Psoas muscle (tissue), 8 donors: ENCODE measurements at regions of chr7 and their contacts with region 1.

Region 1: DNA sequence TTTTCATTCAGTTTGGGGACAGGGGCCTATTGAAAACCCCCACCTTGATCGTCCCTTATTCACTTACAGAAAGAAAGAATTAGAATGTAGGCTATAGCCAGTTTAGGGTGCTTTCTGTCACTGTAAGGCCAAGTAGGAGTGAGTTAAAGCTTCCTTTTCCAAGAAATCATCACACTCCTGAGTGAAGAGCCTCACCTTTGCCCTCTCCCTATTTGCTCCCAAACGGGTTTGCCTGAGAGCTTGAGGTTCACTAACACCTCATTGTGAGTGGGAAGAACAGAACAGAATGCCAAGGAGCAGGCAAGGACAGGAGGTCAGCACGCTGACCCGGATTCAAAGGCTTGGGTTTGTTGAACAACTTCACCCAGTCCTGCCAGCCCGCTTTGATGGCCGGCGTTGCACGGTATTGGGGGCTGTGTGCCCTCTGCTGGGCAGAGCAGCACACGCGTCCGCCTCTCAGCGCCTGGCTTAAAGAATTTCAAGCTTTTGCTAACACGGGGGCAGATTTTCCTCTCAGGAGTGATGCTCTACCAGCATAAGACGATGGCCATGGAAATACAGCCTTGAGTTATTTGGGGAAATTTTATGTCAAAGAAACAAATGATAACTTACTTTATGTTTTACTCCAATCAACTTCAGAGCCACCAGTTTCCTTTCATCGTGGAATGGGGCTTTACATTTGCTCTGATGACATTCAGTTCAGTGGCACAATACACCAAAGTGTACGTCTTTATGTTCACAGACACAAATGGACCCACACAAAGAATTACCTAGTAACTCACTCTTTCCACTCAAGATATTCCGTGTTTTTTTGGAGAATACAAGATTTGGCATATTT is 470.0 kb downstream of the SUGCT start:
- DNase-seq: peak; percentile 13 to 59
- ATAC-seq: peak; percentile 42 to 74 (median 70)
- H3K4me3 ChIP-seq: no peak overlapping the region
- H3K27ac ChIP-seq: no peak overlapping the region
- H3K4me1 ChIP-seq: no peaks in the 10 kb centered on the region
- H3K27me3 ChIP-seq: no peaks in the 10 kb centered on the region
- CTCF ChIP-seq: peak; percentile 50

Region 2: GRCh38 chr7:40329601-40330153 is 275.1 kb before region 1 on chr7:
- intact Hi-C with region 1: loop called (anchors 5 kb)
- DNase-seq: no peak
- ATAC-seq: peak in 1 of 4 donors; percentile 67
- H3K4me3 ChIP-seq: no peak overlapping the region
- H3K27ac ChIP-seq: no peak overlapping the region
- H3K4me1 ChIP-seq: no peaks in the 10 kb centered on the region
- H3K27me3 ChIP-seq: no peaks in the 10 kb centered on the region
- CTCF ChIP-seq: peak; percentile 80

Region 3: GRCh38 chr7:40717242-40717641 is 112.4 kb after region 1 on chr7:
- intact Hi-C with region 1: no loop called
- DNase-seq: peak; percentile 64 to 76
- ATAC-seq: peak; percentile 78 to 87 (median 83)
- H3K4me3 ChIP-seq: no peak overlapping the region
- H3K27ac ChIP-seq: no peak overlapping the region
- H3K4me1 ChIP-seq: no peaks in the 10 kb centered on the region
- H3K27me3 ChIP-seq: no peaks in the 10 kb centered on the region
- CTCF ChIP-seq: no peak